Mucosa of descending colon (tissue), 3 donors: ENCODE measurements at regions of chr6 and their contacts with region 1.

Region 1: GRCh38 chr6:82247634-82248232 is at the start of gene IBTK:
- DNase-seq: peak; percentile 96 to 98 (median 96)
- ATAC-seq: peak; percentile 95
- H3K4me3 ChIP-seq: peak within 1 kb of the TSS; percentile 58
- H3K4me1 ChIP-seq: peaks cover 10% of the 10 kb centered on the region
- CTCF ChIP-seq: no peak
- total RNA-seq, gene IBTK: 30.6 to 42.9 (median 32.8) TPM

Region 2: DNA sequence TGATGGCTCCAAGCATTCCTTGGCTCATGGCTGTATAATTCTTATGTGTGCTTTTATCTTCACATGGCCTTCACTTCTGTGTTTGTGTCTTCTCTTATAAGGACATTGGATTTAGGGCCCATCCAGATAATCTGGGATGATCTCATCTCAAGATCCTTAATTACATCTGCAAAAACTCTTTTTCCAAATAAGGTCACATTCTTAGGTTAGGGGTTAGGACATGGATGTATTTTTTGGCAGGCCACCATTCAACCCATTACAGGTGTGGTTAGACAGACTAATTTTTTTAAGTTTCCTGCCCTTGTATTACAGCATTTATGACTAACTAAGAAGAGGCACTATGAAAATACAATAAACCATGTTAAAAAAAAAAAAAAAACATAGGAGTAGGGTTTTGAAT is 369.9 kb after region 1 on chr6:
- intact Hi-C with region 1: no loop called
- DNase-seq: no peak
- ATAC-seq: no peak
- H3K4me3 ChIP-seq: no peak overlapping the region
- H3K4me1 ChIP-seq: no peaks in the 10 kb centered on the region
- CTCF ChIP-seq: no peak

Region 3: DNA sequence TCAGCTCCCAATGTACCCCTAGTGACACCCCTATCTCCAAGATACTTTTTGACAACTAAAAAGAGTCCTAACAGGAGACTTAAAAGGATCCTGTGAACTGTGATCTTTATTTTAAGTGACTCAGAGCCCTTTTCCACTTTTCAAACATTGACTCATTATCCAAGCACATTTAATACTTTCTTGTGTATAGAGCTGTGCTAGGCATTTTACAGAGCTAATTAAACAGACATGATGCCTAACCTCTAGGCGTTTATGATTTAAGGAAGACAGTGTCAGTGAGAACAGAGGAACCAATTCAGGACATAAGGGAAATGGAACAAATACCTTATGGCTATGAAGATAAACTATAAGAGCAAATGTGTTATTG is 398.5 kb after region 1 on chr6:
- intact Hi-C with region 1: no loop called
- DNase-seq: no peak
- ATAC-seq: no peak
- H3K4me3 ChIP-seq: no peak overlapping the region
- H3K4me1 ChIP-seq: no peaks in the 10 kb centered on the region
- CTCF ChIP-seq: no peak

Region 4: GRCh38 chr6:83067448-83068413 is 820.0 kb after region 1 on chr6 and contains the start of gene DOP1A:
- intact Hi-C with region 1: loop called in 1 of 2 experiments (anchors 10 kb)
- DNase-seq: peak; percentile 97 to 98 (median 98)
- ATAC-seq: peak; percentile 95
- H3K4me3 ChIP-seq: peak within 1 kb of the TSS; percentile 94
- H3K4me1 ChIP-seq: peaks cover 20% of the 10 kb centered on the region
- CTCF ChIP-seq: peak; percentile 99
- total RNA-seq, gene DOP1A: 28.0 to 35.8 (median 30.4) TPM